ENCODE measurements at regions of chr3 and their contacts with region 1.

Region 1: DNA sequence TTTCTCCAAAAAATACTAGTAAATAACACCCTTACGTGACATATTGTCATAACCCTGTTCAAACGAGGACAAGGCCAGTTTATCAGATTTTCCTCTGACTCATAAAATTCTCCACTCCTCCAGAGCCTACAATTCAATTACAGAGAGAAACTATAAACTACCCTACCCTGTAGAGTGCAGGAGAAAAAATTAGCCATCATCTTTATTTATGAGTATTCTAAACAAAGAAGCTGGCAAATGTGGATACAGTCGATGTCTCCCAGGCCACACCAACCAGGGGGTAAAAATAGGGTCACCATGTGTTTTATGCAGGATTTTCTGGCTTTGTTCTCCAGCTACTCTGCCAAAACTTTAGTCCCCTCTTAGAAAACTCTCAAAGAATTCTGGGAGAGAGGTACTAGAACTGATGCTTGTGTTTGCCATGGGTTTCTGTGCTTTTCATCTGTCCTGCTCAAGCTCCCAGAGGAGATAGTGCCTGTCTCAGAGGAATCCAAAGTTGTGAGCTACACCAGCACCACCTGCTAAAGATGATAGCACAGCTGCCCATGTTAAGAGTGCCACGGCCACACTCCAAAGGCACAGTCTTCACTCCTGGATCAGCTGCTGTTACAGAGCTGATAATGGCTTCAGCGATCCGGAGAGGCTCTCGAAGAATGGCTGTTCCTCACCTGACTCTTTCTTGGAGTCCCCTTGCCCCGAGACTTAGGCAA is 150.2 kb downstream of the IMPG2 start:
- DNase-seq: no peak
- ATAC-seq: no peak
- H3K4me3 ChIP-seq: no peak overlapping the region
- H3K27ac ChIP-seq: no peak overlapping the region
- H3K4me1 ChIP-seq: no peaks in the 10 kb centered on the region
- CTCF ChIP-seq: no peak
- EP300 ChIP-seq: no peak
- POLR2A ChIP-seq: no peak
- RAD21 ChIP-seq: no peak

Region 2: DNA sequence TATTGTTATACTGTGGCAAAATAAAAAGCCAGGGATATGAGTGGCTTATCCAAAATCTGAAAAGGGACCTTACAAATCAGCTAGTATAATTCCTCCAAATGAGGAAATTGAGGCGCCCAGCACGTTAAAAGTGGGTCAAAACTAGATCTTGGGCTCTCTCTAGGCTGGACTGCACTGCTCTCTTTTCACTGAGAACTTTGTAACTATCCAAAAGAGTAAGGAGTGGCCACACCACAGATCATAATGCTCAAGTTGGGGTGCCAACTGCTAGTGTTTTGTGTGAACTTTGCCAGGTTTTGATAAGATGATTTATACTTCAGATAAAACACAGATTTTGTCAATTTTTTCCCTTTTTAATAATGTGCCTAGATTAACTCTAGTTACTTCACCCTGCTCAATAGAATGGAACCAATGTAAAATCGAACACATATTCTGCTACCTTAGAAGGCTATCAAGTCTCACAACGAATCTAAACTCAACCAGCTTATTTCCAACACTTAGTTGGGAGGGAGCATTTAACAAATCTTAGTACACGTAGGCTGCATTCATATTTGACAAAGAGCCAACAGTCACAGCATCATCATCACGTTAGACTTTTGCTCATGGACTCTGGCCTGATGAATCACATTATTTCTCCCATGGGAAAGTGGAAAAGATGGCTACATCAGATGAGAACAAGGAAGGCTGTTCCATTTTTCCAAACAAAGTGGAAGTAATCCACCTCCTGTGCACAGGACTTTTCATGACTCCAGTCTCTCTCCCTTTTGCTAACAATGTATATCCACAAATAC is 241.4 kb before region 1 on chr3:
- CTCF ChIA-PET with region 1: no interaction called
- POLR2A ChIA-PET with region 1: no interaction called
- DNase-seq: peak in 1 of 2 experiments; percentile 76
- ATAC-seq: peak; percentile 54 to 65; a peak in 4 of 6 replicates
- H3K4me3 ChIP-seq: no peak overlapping the region
- H3K27ac ChIP-seq: peak overlapping the region; percentile 9 to 28; a peak in 3 of 6 replicates
- H3K4me1 ChIP-seq: peaks cover 11% of the 10 kb centered on the region; the same call in 2 of the 3 replicates
- CTCF ChIP-seq: no peak
- EP300 ChIP-seq: no peak
- POLR2A ChIP-seq: no peak
- RAD21 ChIP-seq: no peak

Region 3: DNA sequence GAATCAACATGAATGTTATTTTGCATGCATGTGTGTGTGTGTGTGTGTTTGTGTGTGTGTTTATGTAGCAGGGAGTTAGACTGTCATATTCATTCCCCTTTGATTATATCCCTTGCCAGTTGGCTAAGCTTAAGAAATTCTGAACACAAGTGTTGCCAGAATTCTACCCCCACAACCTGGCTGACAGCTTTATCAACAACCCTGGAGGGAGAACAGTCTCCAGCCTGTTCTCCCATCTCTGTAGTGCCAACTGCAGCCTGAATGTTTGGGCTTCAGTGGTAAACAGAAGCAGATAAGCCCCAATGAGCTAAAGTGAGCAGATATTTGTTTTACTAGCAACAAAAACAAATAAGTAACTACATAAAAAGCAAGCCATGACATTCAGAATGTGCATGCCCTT is 14.4 kb before region 1 on chr3:
- CTCF ChIA-PET with region 1: no interaction called
- POLR2A ChIA-PET with region 1: interaction called, 14 read pairs
- DNase-seq: no peak
- ATAC-seq: no peak
- H3K4me3 ChIP-seq: no peak overlapping the region
- H3K27ac ChIP-seq: no peak overlapping the region
- H3K4me1 ChIP-seq: peaks cover 14% of the 10 kb centered on the region; the same call in 2 of the 3 replicates
- CTCF ChIP-seq: no peak
- EP300 ChIP-seq: no peak
- POLR2A ChIP-seq: no peak
- RAD21 ChIP-seq: no peak

Region 4: GRCh38 chr3:101189796-101190195 is 19.6 kb after region 1 on chr3:
- CTCF ChIA-PET with region 1: no interaction called
- POLR2A ChIA-PET with region 1: no interaction called
- DNase-seq: peak in 1 of 2 experiments; percentile 46
- ATAC-seq: peak in 1 of 2 experiments; percentile 71; a peak in 2 of 6 replicates
- H3K4me3 ChIP-seq: no peak overlapping the region
- H3K27ac ChIP-seq: peak overlapping the region; percentile 63 to 78
- H3K4me1 ChIP-seq: peaks cover 25% of the 10 kb centered on the region
- CTCF ChIP-seq: no peak
- EP300 ChIP-seq: peak in 1 of 2 experiments; percentile 40; a peak in 1 of 5 replicates
- POLR2A ChIP-seq: no peak
- RAD21 ChIP-seq: 0 out of 5 replicates have a peak, but pooled peaks of 1 of the 2 experiments have one; percentile 32

Measured in A549 (cell line).